ENCODE measurements at regions of chr10 and their contacts with region 1.

Region 1: GRCh38 chr10:114550756-114551635 is 107.1 kb downstream of the ABLIM1 start:
- DNase-seq: no peak
- H3K4me3 Mint-ChIP-seq: no peak overlapping the region
- H3K27ac Mint-ChIP-seq: peak overlapping the region; percentile 15
- H3K4me1 Mint-ChIP-seq: peaks cover 16% of the 10 kb centered on the region
- H3K27me3 Mint-ChIP-seq: no peaks in the 10 kb centered on the region

Region 2: DNA sequence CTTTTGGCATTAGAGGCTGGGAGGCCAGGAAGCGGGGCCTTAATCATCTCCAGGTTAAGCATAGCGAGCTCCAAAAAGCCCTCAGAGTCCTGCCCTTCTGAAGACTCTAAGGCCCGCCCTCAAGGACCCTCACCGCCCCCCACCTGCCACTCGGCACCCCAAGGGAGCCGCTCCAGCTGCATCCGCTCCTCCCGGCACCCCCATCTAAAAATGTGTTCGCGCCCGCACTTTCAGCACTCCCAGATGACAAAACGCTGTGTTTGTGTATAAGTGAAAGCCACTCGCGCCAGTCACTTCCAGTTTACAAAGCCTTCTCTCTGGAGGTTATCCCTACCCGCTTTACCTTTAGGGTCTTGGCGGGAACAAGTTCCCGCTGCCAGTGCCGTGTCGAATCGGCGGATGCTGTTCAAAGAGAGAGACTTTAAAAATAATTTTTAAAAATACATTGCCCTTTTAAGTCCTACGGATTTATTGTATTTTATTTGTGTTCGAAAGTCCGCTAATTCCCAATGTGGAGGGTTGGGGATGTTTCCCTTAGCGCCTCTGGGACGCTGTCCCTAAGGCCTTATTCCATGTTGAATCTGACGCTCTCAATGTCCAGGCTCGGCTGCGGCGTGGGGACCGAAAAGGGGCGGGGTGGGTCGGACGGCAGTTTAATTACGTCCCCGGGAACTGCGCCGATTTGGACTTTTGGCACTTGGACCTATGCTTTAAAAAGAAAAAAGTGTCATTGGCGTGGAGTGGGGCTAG is 696.8 kb before region 1 on chr10 and contains the starts of genes DCLRE1A and NHLRC2:
- CTCF ChIA-PET with region 1: no interaction called
- POLR2A ChIA-PET with region 1: no interaction called
- intact Hi-C with region 1: loop called (anchors 10 kb)
- DNase-seq: peak; percentile 76
- H3K4me3 Mint-ChIP-seq: peak within 1 kb of the TSS; percentile 87
- H3K27ac Mint-ChIP-seq: peak within 1 kb of the TSS; percentile 96
- H3K4me1 Mint-ChIP-seq: peaks cover 42% of the 10 kb centered on the region
- H3K27me3 Mint-ChIP-seq: no peaks in the 10 kb centered on the region
- total RNA-seq, gene DCLRE1A: 13.8 to 16.6 TPM
- total RNA-seq, gene NHLRC2: 21.8 to 23.7 TPM

Region 3: GRCh38 chr10:114486938-114487814 is 63.8 kb before region 1 on chr10:
- CTCF ChIA-PET with region 1: interaction called, 10 read pairs
- POLR2A ChIA-PET with region 1: no interaction called
- intact Hi-C with region 1: no loop called
- DNase-seq: peak; percentile 63
- H3K4me3 Mint-ChIP-seq: no peak overlapping the region
- H3K27ac Mint-ChIP-seq: peak overlapping the region; percentile 85
- H3K4me1 Mint-ChIP-seq: peaks cover 53% of the 10 kb centered on the region
- H3K27me3 Mint-ChIP-seq: no peaks in the 10 kb centered on the region

Region 4: GRCh38 chr10:114694752-114695151 is 143.8 kb after region 1 on chr10:
- CTCF ChIA-PET with region 1: interaction called, 30 read pairs
- POLR2A ChIA-PET with region 1: no interaction called
- intact Hi-C with region 1: loop called (anchors 1 kb)
- DNase-seq: peak; percentile 63
- H3K4me3 Mint-ChIP-seq: no peak overlapping the region
- H3K27ac Mint-ChIP-seq: no peak overlapping the region
- H3K4me1 Mint-ChIP-seq: peaks cover 5% of the 10 kb centered on the region
- H3K27me3 Mint-ChIP-seq: peaks cover 4% of the 10 kb centered on the region

Region 5: DNA sequence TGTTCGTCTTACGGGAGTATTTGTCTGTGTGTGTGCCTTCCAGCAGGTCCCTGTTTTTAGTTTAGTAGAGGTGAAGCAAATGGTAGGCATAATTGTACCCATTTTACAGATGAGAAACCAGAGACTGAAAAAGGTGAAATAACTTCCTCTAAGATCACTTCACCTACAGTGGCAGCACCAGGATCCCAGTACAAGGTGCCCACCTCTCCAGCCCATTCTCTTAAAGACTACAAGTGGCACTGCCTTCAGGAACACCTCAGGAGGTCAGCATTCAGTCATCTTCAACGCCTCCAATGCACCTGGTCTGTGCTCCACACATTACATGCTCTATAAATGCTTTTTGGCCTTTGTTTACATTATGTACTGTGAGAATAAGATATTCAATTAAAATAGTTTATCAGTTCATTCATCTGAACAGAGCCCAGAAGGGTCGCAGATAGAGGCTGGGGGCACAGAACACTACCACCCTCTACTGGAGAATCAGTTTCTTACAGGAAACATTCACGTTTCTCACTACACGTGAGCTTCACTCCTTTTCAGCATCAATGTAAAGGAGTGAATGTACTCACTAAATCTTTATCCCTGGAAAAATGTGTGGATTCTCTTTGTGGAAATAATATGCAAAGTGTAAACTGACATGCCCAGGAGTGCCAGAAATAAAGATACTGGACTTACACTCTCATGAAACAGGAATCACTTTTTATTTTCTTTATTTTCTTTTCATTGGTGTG is 152.5 kb after region 1 on chr10:
- CTCF ChIA-PET with region 1: interaction called, 9 read pairs
- POLR2A ChIA-PET with region 1: no interaction called
- intact Hi-C with region 1: loop called (anchors 1 kb)
- DNase-seq: no peak
- H3K4me3 Mint-ChIP-seq: no peak overlapping the region
- H3K27ac Mint-ChIP-seq: no peak overlapping the region
- H3K4me1 Mint-ChIP-seq: no peaks in the 10 kb centered on the region
- H3K27me3 Mint-ChIP-seq: peaks cover 7% of the 10 kb centered on the region

Region 6: DNA sequence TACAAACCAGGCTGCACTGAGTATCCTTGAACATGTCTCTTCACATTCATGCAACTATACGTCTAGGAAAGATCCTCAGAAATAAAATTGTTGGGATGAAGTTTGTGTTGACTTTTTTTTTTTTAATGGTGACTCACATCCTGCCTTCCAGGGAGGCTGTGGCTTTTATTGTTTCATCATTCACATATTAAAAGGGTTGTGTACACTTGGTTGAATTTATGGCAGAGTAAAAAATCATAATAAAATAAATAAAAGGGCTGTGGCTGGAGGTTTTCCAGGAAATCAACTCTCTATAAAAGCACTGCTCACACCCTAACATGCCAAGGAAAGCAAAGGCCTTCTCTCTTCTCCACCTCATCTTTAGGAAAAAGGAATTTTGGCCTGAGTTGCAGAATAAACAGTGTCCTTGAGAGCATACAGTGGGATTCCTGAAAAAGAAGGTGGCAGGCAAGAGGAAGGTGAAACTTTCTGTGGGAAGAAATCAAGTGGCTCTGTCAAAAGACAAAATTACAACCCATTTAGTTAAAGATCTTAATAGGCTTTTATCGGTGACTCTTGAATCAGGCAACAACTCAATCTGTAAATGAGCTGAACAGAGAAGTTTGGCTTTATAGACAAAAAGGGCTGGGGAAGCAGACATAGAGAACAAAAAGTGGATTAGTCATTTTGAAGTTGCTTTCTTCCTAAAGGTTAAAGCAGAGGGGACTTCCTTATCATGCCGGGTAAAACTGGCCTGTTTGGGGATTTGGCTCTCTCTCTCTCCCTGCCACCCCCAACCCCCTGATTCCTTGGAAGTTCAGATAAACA is 229.0 kb after region 1 on chr10:
- CTCF ChIA-PET with region 1: interaction called, 18 read pairs
- POLR2A ChIA-PET with region 1: no interaction called
- intact Hi-C with region 1: no loop called
- DNase-seq: no peak
- H3K4me3 Mint-ChIP-seq: no peak overlapping the region
- H3K27ac Mint-ChIP-seq: no peak overlapping the region
- H3K4me1 Mint-ChIP-seq: peaks cover 7% of the 10 kb centered on the region
- H3K27me3 Mint-ChIP-seq: no peaks in the 10 kb centered on the region